Panc1 (cell line): ENCODE measurements at regions of chr5 and their contacts with region 1.

Region 1: GRCh38 chr5:172868924-172869591 is 35.0 kb downstream of the ERGIC1 start:
- DNase-seq: peak; percentile 79
- ATAC-seq: peak; percentile 78
- H3K4me3 ChIP-seq: peak overlapping the region in 1 of 2 experiments; percentile 25; a peak in 2 of 4 replicates
- H3K27ac ChIP-seq: peak overlapping the region; percentile 98
- H3K4me1 ChIP-seq: peaks cover 97% of the 10 kb centered on the region
- H3K27me3 ChIP-seq: no peaks in the 10 kb centered on the region
- CTCF ChIP-seq: no peak

Region 2: GRCh38 chr5:172770675-172771438 is 98.2 kb before region 1 on chr5 and contains the start of gene DUSP1:
- CTCF ChIA-PET with region 1: no interaction called
- POLR2A ChIA-PET with region 1: interaction called, 4 read pairs
- in situ Hi-C with region 1: no loop called
- intact Hi-C with region 1: loop called (anchors 5 kb)
- DNase-seq: peak; percentile 76
- ATAC-seq: peak; percentile 72
- H3K4me3 ChIP-seq: peak within 1 kb of the TSS; percentile 78 to 97
- H3K27ac ChIP-seq: peak within 1 kb of the TSS; percentile 99
- H3K4me1 ChIP-seq: peaks cover 69% of the 10 kb centered on the region
- H3K27me3 ChIP-seq: no peaks in the 10 kb centered on the region
- CTCF ChIP-seq: peak; percentile 80
- total RNA-seq, gene DUSP1: 79.9 TPM

Region 3: DNA sequence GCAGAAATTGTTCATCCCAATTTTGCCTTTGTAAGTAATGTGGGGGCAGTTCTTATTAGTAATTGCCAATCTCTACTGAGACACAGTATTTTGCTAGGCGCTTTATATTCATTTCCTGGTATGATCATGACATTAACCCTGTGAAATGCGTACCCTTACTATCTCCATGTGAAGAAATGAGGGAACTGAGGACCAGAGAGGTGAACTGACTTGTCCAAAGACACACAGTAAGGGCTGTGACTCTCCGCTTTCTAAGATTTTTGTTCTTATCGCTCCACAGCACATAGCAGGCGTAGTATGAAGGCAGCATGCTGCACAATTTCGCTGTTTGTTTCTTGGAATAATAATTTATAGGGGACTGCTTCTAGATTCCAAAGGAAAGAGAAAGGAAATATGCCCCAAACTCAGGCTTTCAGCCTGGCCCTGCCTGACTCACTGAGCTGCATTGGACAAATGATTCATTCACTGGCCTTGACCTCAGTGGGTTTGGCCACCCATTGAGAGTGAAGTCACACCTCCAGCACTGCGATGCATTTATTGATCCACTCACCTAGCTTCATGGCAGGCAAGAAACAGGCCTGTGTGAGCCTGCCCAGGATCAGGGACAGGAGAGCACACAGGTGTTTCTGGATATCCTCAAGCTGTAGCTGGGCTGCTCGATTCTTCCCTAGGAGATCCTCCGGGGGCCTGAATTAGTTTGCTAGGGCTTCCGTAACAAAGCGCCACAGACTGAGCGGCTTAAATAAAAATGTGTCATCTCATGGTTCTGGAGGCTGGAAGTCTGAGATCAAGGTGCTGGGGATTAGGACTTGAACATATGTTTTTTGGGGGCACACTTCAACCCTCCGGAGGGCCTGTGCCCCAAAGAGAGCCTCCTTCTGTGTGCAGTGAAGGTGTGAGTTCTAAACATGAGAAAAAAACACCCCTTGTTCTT is 90.9 kb before region 1 on chr5:
- CTCF ChIA-PET with region 1: interaction called, 9 read pairs
- POLR2A ChIA-PET with region 1: interaction called, 11 read pairs
- in situ Hi-C with region 1: no loop called
- intact Hi-C with region 1: loop called (anchors 5 kb)
- DNase-seq: peak; percentile 88
- ATAC-seq: peak; percentile 59
- H3K4me3 ChIP-seq: peak overlapping the region in 1 of 2 experiments; percentile 22; a peak in 2 of 4 replicates
- H3K27ac ChIP-seq: peak overlapping the region; percentile 99
- H3K4me1 ChIP-seq: peaks cover 88% of the 10 kb centered on the region
- H3K27me3 ChIP-seq: no peaks in the 10 kb centered on the region
- CTCF ChIP-seq: no peak

Region 4: GRCh38 chr5:172897481-172898217 is 28.6 kb after region 1 on chr5:
- CTCF ChIA-PET with region 1: no interaction called
- POLR2A ChIA-PET with region 1: interaction called, 16 read pairs
- in situ Hi-C with region 1: no loop called
- intact Hi-C with region 1: no loop called
- DNase-seq: no peak
- ATAC-seq: peak; percentile 46
- H3K4me3 ChIP-seq: peak overlapping the region in 1 of 2 experiments; percentile 5; a peak in 1 of 4 replicates
- H3K27ac ChIP-seq: peak overlapping the region; percentile 80
- H3K4me1 ChIP-seq: peaks cover 39% of the 10 kb centered on the region
- H3K27me3 ChIP-seq: no peaks in the 10 kb centered on the region
- CTCF ChIP-seq: no peak

Region 5: DNA sequence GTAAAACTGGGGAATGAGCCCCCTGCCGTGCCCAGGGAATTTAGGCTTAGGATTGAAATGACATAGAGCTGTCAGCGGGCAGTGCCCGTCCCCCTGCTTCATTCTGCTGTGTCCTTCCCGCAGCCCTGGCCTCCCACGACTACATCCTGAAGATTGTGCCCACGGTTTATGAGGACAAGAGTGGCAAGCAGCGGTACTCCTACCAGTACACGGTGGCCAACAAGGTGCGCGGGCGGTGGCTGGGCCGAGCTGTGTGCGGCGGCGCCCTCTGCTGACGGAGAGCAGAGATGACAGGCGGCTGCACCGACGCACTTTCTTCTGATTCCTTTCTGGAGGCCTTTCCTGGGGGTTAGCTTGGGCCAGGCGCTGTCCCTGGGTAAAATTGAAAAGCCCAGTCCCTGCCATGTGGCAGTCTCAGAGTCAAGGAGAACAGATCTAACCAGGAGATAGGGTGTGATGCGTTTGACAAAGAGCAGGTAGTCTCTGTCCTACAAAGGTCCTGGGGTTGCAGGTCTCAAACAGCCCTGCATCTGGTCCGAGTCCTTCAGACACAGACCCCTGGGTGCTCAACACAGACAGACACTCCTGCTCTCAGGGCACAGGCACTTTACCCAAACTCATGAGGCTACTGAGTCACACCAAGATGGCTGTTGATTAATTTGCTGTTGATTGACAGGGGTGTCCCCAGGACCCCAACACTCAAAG is 63.4 kb after region 1 on chr5:
- CTCF ChIA-PET with region 1: no interaction called
- POLR2A ChIA-PET with region 1: no interaction called
- in situ Hi-C with region 1: no loop called
- intact Hi-C with region 1: loop called (anchors 2 kb)
- DNase-seq: no peak
- ATAC-seq: peak; percentile 82
- H3K4me3 ChIP-seq: no peak overlapping the region
- H3K27ac ChIP-seq: peak overlapping the region; percentile 36; the same call in 1 of the 2 replicates
- H3K4me1 ChIP-seq: peaks cover 19% of the 10 kb centered on the region
- H3K27me3 ChIP-seq: no peaks in the 10 kb centered on the region
- CTCF ChIP-seq: peak; percentile 98